ENCODE measurements at regions of chrX and their contacts with region 1.

Region 1: GRCh38 chrX:1500701-1501624 is 36.0 kb downstream of the P2RY8 start:
- H3K4me3 Mint-ChIP-seq: no peak overlapping the region
- H3K27ac Mint-ChIP-seq: peak overlapping the region; percentile 50
- H3K4me1 Mint-ChIP-seq: peaks cover 34% of the 10 kb centered on the region
- H3K27me3 Mint-ChIP-seq: peaks cover 3% of the 10 kb centered on the region

Region 2: GRCh38 chrX:1468250-1468772 is 32.7 kb before region 1 on chrX:
- intact Hi-C with region 1: loop called (anchors 5 kb)
- H3K4me3 Mint-ChIP-seq: no peak overlapping the region
- H3K27ac Mint-ChIP-seq: peak overlapping the region; percentile 51
- H3K4me1 Mint-ChIP-seq: peaks cover 55% of the 10 kb centered on the region
- H3K27me3 Mint-ChIP-seq: peaks cover 3% of the 10 kb centered on the region

Region 3: DNA sequence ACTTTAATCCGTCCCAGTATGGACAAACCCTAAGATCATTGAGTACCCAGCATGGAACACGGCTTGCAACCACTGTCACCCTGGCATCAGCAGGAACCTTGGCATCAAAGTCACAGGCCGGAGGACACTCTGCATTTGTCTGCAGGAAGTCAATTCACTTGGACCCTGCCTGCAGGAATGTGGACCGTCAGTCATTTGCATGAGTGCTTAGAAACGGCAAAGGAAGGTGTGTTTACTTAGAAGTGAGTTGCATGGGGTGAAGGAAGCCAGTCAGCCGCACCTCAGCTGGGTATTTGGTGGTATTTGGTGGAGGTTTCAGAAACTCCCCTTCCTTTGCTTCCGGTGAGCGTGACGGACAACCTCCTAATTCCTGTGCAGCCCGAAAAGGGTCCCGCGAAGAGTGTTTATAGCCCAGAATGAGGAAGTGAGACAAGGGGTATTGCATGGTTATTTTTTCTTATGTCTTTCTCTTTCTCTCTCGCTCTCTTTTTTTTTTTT is 20.5 kb after region 1 on chrX:
- intact Hi-C with region 1: loop called (anchors 1 kb)
- H3K4me3 Mint-ChIP-seq: peak overlapping the region; percentile 59
- H3K27ac Mint-ChIP-seq: peak overlapping the region; percentile 20
- H3K4me1 Mint-ChIP-seq: peaks cover 42% of the 10 kb centered on the region
- H3K27me3 Mint-ChIP-seq: no peaks in the 10 kb centered on the region

Region 4: DNA sequence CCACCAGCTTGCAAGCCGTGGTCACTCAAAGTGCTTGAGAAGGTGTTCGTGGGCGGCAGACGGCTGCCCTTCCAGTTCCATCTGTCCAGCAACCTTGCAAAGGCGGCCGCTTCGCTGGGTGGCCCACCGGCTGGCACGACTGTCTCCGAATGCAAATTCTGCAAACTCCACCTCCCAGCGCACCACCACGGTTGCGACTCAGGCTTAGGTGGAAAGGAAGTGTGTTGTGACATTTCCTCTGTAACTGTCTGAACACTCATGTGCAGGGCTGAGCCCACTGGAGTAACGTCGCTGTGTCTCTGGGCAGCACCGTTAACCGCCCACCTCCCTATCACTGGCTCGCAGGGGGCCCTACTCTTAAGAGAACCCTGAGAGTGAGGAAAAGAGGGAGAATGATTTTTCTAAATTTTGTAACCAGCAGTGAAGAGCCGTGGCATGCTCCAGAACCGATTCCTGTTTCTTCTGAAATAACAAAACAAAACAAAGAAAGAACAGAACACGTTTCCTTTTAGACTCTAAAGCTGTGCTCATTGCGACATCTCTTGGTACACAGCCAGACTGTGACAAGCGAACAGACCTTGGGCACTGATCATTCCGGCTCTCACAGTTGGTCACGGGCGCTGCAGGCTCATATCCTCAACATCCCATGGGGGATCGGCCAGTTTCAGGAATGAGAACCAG is 36.2 kb after region 1 on chrX and contains the start of gene P2RY8:
- intact Hi-C with region 1: loop called (anchors 5 kb)
- H3K4me3 Mint-ChIP-seq: peak within 1 kb of the TSS; percentile 76
- H3K27ac Mint-ChIP-seq: peak within 1 kb of the TSS; percentile 88
- H3K4me1 Mint-ChIP-seq: peaks cover 37% of the 10 kb centered on the region
- H3K27me3 Mint-ChIP-seq: no peaks in the 10 kb centered on the region

Region 5: DNA sequence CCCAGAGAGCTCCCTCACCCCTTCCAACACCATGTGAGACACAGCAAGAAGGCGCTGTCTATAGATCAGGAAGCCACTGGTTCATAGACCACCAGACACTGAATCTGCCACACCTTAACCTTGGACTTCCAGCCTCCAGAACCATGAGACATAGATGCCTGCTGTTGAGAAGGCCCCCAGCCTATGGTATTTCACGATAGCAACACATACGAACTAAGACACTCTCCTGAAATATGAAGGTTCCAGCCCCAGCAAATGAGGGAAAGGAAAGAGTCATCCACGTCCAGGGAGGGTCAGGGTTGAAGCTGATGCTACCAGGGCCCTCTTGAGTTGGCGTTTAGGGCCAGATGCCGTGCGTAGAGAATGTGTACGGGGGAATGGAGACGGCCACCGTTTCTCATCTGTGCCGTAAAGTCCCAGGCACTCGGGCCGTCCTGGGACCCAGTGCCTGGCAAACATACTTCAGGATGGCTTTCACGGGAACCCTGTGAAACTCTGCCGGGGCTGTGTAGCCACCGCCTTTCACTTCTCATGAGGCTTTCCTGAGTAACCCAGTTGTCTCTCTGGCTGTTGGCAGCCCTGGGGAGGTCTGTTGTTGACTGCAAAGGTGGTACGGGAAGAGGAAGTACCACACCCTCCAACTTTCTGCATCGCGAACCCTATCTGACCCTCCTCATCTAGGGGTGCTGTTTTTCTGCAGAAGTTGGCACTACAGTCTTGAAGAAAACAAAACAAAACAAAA is 53.7 kb after region 1 on chrX:
- intact Hi-C with region 1: no loop called
- H3K4me3 Mint-ChIP-seq: no peak overlapping the region
- H3K27ac Mint-ChIP-seq: no peak overlapping the region
- H3K4me1 Mint-ChIP-seq: peaks cover 28% of the 10 kb centered on the region
- H3K27me3 Mint-ChIP-seq: peaks cover 7% of the 10 kb centered on the region

Region 6: DNA sequence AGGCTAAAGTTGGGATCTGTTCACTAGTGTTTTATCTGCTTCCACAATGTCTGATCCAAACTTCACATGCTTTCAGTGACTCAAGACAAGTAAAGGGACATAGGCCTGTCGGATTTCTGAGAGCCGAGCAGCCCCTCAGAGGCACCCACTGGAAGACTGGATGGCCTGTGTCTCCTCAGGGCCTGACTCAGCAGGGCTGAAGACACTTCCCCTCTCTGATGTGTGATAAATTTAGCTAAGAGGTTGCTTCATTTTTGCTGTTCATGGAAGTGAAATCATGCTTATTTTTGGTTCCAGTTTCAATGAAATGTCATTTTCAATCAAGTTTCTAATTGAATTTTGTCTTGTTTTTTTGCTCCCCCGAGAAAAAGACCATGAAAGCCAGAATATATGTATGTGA is 1751.8 kb after region 1 on chrX:
- intact Hi-C with region 1: no loop called
- H3K4me3 Mint-ChIP-seq: peak overlapping the region; percentile 42
- H3K27ac Mint-ChIP-seq: peak overlapping the region; percentile 74
- H3K4me1 Mint-ChIP-seq: peaks cover 17% of the 10 kb centered on the region
- H3K27me3 Mint-ChIP-seq: peaks cover 6% of the 10 kb centered on the region

Measured in dendritic cell treated with granulocyte-macrophage colony-stimulating factor and Interleukin-4, amounts not matched to agents 40 ng/mL and 50 ng/mL, for 4 days (primary cell).